ENCODE measurements at regions of chr14 and their contacts with region 1.

Region 1: GRCh38 chr14:35404449-35405303 is at the start of gene NFKBIA:
- DNase-seq: peak in 1 of 2 experiments; percentile 83
- H3K4me3 ChIP-seq: peak within 1 kb of the TSS; percentile 77 to 99 (median 90)
- H3K27ac ChIP-seq: peak within 1 kb of the TSS; percentile 96
- H3K4me1 ChIP-seq: peaks cover 4 to 19% (median 12%) of the 10 kb centered on the region in 4 experiments
- H3K27me3 ChIP-seq: no peaks in the 10 kb centered on the region
- CTCF ChIP-seq: peak; percentile 37 to 49 (median 37); a peak in 3 of 4 replicates
- EP300 ChIP-seq: no peak
- POLR2A ChIP-seq: no peak; a peak in 1 of 3 replicates
- RAD21 ChIP-seq: peak in 1 of 2 experiments; percentile 32; a peak in 1 of 4 replicates
- total RNA-seq, gene NFKBIA: 24.4 and 25.9 TPM in 2 replicates

Region 2: DNA sequence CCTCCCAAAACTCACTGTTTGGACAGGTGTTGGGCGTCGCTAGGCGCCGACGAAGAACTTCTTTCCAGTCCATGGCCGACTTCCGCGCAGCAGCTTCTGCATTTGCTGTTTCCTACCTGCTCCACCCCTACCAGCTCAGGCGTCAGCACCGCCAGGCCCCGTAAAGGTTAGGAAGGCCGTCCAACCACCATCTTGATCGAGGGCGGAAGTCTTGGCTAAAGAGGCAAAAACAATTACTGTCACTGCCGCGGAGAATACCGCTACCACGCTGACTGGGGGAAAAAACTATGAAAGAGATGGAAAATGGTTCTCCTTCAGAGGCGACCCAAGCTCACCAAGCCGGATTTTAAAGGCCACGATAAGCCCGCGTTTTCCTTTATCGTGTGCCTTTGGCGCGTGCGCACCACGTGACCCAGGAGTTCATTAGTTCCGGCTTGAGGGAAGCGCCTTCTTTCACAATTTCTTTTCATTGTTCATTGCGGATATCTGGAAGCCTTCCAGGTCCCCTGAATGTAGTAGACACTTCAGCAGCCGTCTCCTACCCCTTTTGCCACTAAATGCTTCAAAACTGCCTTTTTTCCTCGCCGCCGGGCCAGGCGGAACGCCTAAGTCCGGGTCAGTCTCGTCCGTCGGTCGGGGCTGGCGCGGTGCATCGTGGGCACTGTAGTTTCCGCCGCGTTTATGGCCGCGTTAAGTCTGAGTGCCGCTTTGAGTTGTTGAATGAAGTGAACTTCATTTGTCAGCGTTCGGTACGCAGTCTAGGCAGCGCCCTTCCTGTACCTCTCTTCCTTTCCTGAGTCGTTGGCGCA is 282.6 kb before region 1 on chr14 and contains the starts of genes PPP2R3C and PRORP:
- CTCF ChIA-PET with region 1: interaction called, 3 read pairs
- POLR2A ChIA-PET with region 1: interaction called, 19 read pairs
- DNase-seq: peak; percentile 87 to 95
- H3K4me3 ChIP-seq: peak within 1 kb of the TSS; percentile 90 to 97 (median 93)
- H3K27ac ChIP-seq: peak within 1 kb of the TSS; percentile 99
- H3K4me1 ChIP-seq: peaks cover 0 to 4% (median 2%) of the 10 kb centered on the region in 4 experiments; a peak in 3 of 7 replicates
- H3K27me3 ChIP-seq: no peaks in the 10 kb centered on the region
- CTCF ChIP-seq: no peak
- EP300 ChIP-seq: peak in 1 of 2 experiments; percentile 28; a peak in 1 of 3 replicates
- POLR2A ChIP-seq: peak; percentile 84 to 97
- RAD21 ChIP-seq: no peak
- total RNA-seq, gene PPP2R3C: 24.6 and 26.7 TPM in 2 replicates
- total RNA-seq, gene PRORP: 43.9 and 44.8 TPM in 2 replicates

Region 3: DNA sequence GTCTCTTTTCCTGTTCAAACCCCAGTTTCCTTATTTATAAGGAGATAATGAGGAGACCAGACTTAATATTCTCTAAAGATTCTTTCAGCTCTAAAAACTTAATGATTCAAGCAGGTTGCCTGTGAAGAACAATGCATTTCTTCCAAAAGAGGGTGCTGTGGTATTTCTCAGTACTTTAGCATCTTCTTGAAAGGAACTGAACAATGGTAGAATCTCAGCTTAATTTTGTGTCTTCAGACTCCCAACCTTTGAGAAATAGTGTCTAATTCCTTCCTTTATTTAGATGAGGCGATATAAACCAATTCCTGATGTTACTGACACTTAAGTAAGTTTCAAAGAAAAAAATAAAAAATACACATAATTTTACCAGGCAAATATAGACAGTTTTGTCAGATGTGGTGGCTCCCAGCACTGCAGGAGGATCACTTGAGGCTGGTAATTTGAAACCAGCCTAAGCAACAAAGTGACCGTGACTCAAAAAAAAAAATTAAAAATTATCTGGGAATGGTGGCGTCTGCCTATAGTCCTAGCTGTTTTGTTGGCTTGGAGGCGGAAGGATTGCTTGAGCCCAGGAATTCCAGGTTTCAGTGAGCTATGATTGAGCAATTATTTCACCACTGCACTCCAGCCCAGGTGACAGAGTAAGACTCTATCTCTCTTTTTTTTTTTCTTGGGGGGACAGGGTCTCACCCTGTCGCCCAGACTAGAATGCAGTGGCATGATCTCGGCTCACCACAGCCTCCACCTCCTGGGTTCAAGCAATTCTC is 189.4 kb before region 1 on chr14:
- CTCF ChIA-PET with region 1: interaction called, 14 read pairs
- POLR2A ChIA-PET with region 1: interaction called, 4 read pairs
- DNase-seq: no peak
- H3K4me3 ChIP-seq: no peak overlapping the region
- H3K27ac ChIP-seq: no peak overlapping the region
- H3K4me1 ChIP-seq: peaks cover 0 to 4% (median 0%) of the 10 kb centered on the region in 4 experiments; a peak in 2 of 7 replicates
- H3K27me3 ChIP-seq: no peaks in the 10 kb centered on the region
- CTCF ChIP-seq: peak in 2 of 3 experiments; percentile 31 to 48; a peak in 2 of 4 replicates
- EP300 ChIP-seq: no peak
- POLR2A ChIP-seq: no peak
- RAD21 ChIP-seq: peak; percentile 60 to 67

Region 4: DNA sequence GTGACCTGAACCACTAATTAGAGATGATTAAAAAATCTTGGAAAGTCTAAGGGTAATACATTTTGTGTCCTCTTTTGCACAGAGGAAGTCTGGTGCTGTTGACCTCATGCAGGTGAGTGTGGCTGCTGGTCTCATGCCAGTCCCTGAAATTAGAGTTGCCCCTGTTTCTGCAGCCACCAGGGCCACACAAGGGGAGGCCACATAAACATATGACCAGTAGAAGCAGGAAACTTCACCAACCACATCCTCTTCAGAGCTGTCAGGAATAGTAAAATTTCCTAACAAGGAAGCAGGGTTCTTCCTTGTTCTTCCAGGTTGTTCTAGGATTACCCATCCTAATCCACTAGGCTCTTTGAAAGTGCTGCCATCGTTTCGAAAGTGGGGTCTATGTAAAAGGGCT is 84.2 kb before region 1 on chr14:
- CTCF ChIA-PET with region 1: interaction called, 5 read pairs
- POLR2A ChIA-PET with region 1: interaction called, 13 read pairs
- DNase-seq: no peak
- H3K4me3 ChIP-seq: no peak overlapping the region
- H3K27ac ChIP-seq: no peak overlapping the region
- H3K4me1 ChIP-seq: no peaks in the 10 kb centered on the region
- H3K27me3 ChIP-seq: no peaks in the 10 kb centered on the region
- CTCF ChIP-seq: no peak
- EP300 ChIP-seq: no peak
- POLR2A ChIP-seq: no peak
- RAD21 ChIP-seq: no peak

Region 5: DNA sequence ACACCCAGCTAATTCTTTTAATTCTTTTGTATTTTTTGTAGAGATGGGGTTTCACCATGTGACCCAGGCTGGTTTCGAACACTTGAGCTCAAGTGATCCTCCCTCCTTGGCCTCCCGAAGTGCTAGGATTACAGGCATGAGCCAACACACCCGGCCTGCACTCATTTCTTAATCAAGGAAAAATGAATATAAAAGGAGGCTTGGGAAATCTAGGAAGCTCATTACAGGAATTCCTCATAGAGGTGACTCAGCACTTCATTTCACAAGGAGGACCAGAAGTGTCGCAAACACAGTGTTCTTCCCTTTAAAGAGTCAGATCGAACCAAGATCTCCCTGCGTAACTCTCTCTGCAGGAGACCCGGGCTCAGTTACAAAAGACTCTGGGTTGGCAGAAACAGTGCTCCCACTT is 30.4 kb before region 1 on chr14:
- CTCF ChIA-PET with region 1: interaction called, 5 read pairs
- POLR2A ChIA-PET with region 1: interaction called, 13 read pairs
- DNase-seq: no peak
- H3K4me3 ChIP-seq: no peak overlapping the region
- H3K27ac ChIP-seq: no peak overlapping the region
- H3K4me1 ChIP-seq: 0 out of 7 replicates have a peak, but pooled peaks cover 0 to under 1% (median 0%) of the 10 kb centered on the region in 4 experiments
- H3K27me3 ChIP-seq: no peaks in the 10 kb centered on the region
- CTCF ChIP-seq: no peak
- EP300 ChIP-seq: no peak
- POLR2A ChIP-seq: no peak
- RAD21 ChIP-seq: no peak

Region 6: DNA sequence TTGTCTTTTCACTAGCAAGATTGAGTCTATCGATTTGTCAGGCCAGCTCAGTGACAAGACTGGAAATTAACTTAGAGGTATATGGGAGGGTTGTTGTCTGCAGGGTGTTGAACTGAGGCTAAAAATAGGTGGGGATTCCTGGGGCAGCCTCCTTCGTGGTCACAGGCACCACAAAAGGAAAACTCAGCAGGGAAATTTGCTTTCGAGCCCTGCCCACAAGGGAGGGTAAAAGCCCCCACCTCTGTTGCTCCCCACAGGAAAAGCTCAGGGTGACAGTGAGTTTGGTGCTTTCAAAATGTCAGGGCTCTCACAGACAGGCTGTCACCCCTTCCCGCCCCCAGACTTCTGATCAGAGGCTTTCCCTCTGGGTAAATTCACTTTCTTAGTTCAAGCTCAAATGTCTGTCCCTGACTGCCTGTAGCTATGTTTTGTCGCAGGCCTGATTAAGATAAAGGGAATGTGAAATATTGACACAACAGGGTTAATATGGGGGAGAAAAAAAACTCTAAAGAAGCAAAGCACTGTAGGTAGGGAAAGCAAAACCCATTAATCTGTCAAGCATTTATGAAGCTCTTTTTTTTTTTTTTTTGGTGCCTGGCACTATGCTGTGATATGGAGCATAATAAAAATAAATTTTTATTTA is 11.6 kb after region 1 on chr14:
- CTCF ChIA-PET with region 1: interaction called, 18 read pairs
- POLR2A ChIA-PET with region 1: interaction called, 34 read pairs
- DNase-seq: no peak
- H3K4me3 ChIP-seq: no peak overlapping the region
- H3K27ac ChIP-seq: no peak overlapping the region
- H3K4me1 ChIP-seq: peaks cover 0 to 12% (median 2%) of the 10 kb centered on the region in 4 experiments; a peak in 5 of 7 replicates
- H3K27me3 ChIP-seq: no peaks in the 10 kb centered on the region
- CTCF ChIP-seq: no peak
- EP300 ChIP-seq: no peak
- POLR2A ChIP-seq: no peak
- RAD21 ChIP-seq: no peak

Region 7: DNA sequence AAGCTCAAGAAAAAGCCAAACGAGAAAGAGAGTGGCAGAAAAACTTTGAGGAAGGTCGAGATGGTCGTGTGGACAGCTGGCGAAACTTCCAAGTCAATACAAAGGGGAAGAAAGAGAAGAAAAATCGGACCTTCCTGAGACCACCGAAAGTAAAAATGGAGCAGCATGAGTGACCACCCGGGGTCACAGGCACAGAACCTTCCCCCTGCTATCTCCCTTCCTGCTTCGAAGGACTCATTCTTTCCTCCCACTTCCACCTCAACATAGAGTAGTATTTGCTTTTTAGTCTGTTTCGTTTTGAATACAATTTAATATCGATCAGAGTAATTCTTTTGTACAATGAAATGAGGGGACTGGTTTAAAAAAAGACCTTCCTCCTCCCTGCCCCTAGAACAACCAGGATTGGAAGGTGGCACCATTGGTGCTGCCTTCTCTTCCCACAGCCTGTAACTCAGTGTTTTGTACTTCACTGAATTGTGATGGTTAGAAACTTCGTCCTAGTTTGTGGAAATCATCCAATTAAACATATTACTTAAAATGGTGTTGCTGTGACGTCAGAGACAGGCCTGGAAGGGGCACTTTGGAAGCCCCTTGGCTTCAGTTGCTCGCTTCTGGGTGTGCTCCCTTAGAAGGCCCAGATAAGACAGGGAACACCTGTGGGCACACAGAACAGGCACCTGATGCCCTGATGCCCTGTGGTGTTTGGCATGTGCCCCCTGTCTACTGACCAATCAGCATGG is 26.0 kb after region 1 on chr14:
- CTCF ChIA-PET with region 1: no interaction called
- POLR2A ChIA-PET with region 1: no interaction called
- DNase-seq: no peak
- H3K4me3 ChIP-seq: no peak overlapping the region
- H3K27ac ChIP-seq: no peak overlapping the region
- H3K4me1 ChIP-seq: no peaks in the 10 kb centered on the region
- H3K27me3 ChIP-seq: no peaks in the 10 kb centered on the region
- CTCF ChIP-seq: no peak
- EP300 ChIP-seq: no peak
- POLR2A ChIP-seq: no peak
- RAD21 ChIP-seq: no peak